ENCODE measurements at regions of chr4 and their contacts with region 1.

Region 1: DNA sequence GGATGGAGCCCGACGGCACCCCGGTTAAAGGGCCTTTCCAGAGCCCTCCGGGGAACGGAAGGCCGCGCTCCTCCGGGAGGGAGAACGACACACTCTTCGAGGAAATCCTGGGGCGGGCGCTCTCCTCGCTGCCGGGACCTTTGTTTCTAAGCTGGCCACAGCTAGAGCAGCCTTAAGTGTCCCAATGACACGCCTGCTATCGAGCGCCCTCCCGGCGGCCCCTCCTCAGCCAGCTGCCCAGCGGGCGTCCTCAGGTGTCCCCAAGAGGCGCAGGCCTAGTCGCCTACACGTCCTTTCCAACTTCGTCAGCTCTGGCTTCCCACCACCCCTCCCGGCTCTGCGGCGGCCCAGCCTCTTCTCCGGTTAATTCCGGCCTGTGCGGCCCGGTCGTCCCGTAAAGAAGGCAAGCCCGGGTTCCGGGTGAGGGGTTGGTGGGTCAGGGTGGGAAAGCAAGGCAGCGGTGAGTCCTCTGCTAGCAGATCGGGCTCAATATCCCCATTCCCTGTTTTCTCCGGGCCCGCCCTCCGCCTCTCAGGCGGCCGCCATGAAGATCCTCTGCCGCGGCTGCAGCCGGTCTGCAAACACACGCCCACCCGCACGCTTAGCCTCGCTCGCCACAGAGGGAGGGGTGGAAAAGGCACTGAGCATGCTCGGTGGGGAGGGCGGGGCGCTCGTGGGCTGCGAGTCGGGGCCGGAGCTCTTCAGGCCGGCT is 449 bp upstream of the RAP1GDS1 start:
- DNase-seq: peak in 6 of 9 donors; percentile 69 to 95 (median 78)
- ATAC-seq: peak; percentile 85
- H3K4me3 ChIP-seq: peak overlapping the region; percentile 90
- H3K4me3 Mint-ChIP-seq: peak overlapping the region; percentile 92 to 98 (median 94)
- H3K27ac ChIP-seq: peak overlapping the region; percentile 86
- H3K27ac Mint-ChIP-seq: peak overlapping the region; percentile 84 to 97 (median 92)
- H3K4me1 ChIP-seq: peaks cover 5 to 12% of the 10 kb centered on the region in 2 donors
- H3K4me1 Mint-ChIP-seq: peaks cover 31 to 60% (median 54%) of the 10 kb centered on the region in 7 donors
- H3K27me3 ChIP-seq: no peaks in the 10 kb centered on the region
- H3K27me3 Mint-ChIP-seq: no peaks in the 10 kb centered on the region

Region 2: GRCh38 chr4:98242538-98242937 is 18.2 kb before region 1 on chr4:
- CTCF ChIA-PET with region 1: no interaction called
- POLR2A ChIA-PET with region 1: no interaction called
- intact Hi-C with region 1: no loop called
- DNase-seq: no peak
- ATAC-seq: no peak
- H3K4me3 ChIP-seq: no peak overlapping the region
- H3K4me3 Mint-ChIP-seq: no peak overlapping the region
- H3K27ac ChIP-seq: no peak overlapping the region
- H3K27ac Mint-ChIP-seq: no peak overlapping the region
- H3K4me1 ChIP-seq: no peaks in the 10 kb centered on the region
- H3K4me1 Mint-ChIP-seq: no peaks in the 10 kb centered on the region
- H3K27me3 ChIP-seq: peaks cover 0 to 3% of the 10 kb centered on the region in 2 donors
- H3K27me3 Mint-ChIP-seq: peaks cover 8 to 33% (median 18%) of the 10 kb centered on the region in 5 donors

Region 3: GRCh38 chr4:98275145-98275544 is 14.4 kb after region 1 on chr4:
- CTCF ChIA-PET with region 1: interaction called, 4 read pairs
- POLR2A ChIA-PET with region 1: interaction called, 3 read pairs
- intact Hi-C with region 1: loop called in 1 of 2 experiments (anchors 1 kb)
- DNase-seq: no peak
- ATAC-seq: no peak
- H3K4me3 ChIP-seq: no peak overlapping the region
- H3K4me3 Mint-ChIP-seq: peak overlapping the region in 1 of 10 donors; percentile 22
- H3K27ac ChIP-seq: no peak overlapping the region
- H3K27ac Mint-ChIP-seq: no peak overlapping the region
- H3K4me1 ChIP-seq: no peaks in the 10 kb centered on the region
- H3K4me1 Mint-ChIP-seq: peaks cover 2 to 37% (median 25%) of the 10 kb centered on the region in 7 donors
- H3K27me3 ChIP-seq: no peaks in the 10 kb centered on the region
- H3K27me3 Mint-ChIP-seq: no peaks in the 10 kb centered on the region

Region 4: DNA sequence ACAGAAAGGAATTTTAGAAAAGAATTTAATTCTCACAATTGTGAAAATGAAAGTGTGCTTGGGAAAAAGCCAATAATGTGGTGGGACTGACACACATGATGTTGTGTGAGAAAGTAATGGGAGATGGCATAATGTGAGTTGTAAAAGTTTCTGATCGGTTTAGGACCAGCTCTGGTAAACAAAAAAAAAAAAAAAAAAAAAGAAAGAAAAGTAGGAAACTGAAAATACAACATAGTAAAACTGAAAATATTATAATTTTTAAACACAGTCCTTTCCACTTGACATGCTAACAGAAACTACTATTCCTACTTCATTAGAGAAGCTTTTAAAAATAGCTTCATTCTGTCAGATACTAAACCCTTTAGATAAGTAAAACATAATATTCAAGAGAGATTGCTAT is 28.6 kb after region 1 on chr4:
- CTCF ChIA-PET with region 1: interaction called, 3 read pairs
- POLR2A ChIA-PET with region 1: interaction called, 4 read pairs
- intact Hi-C with region 1: loop called (anchors 2 kb)
- DNase-seq: no peak
- ATAC-seq: no peak
- H3K4me3 ChIP-seq: no peak overlapping the region
- H3K4me3 Mint-ChIP-seq: peak overlapping the region in 6 of 10 donors; percentile 1 to 64 (median 34)
- H3K27ac ChIP-seq: no peak overlapping the region
- H3K27ac Mint-ChIP-seq: peak overlapping the region in 3 of 9 donors; percentile 26 to 49 (median 36)
- H3K4me1 ChIP-seq: peaks cover 0 to 6% of the 10 kb centered on the region in 2 donors
- H3K4me1 Mint-ChIP-seq: peaks cover 29 to 64% (median 53%) of the 10 kb centered on the region in 7 donors
- H3K27me3 ChIP-seq: no peaks in the 10 kb centered on the region
- H3K27me3 Mint-ChIP-seq: no peaks in the 10 kb centered on the region

Region 5: GRCh38 chr4:98446499-98447375 is 186.0 kb after region 1 on chr4:
- CTCF ChIA-PET with region 1: no interaction called
- POLR2A ChIA-PET with region 1: interaction called, 3 read pairs
- intact Hi-C with region 1: loop called (anchors 1 to 10 kb)
- DNase-seq: peak in 7 of 9 donors; percentile 23 to 53 (median 42)
- ATAC-seq: peak; percentile 89
- H3K4me3 ChIP-seq: peak overlapping the region; percentile 9
- H3K4me3 Mint-ChIP-seq: peak overlapping the region; percentile 49 to 75 (median 71)
- H3K27ac ChIP-seq: no peak overlapping the region
- H3K27ac Mint-ChIP-seq: peak overlapping the region; percentile 52 to 88 (median 76)
- H3K4me1 ChIP-seq: peaks cover 30 to 39% of the 10 kb centered on the region in 2 donors
- H3K4me1 Mint-ChIP-seq: peaks cover 33 to 44% (median 37%) of the 10 kb centered on the region in 7 donors
- H3K27me3 ChIP-seq: no peaks in the 10 kb centered on the region
- H3K27me3 Mint-ChIP-seq: no peaks in the 10 kb centered on the region

Region 6: DNA sequence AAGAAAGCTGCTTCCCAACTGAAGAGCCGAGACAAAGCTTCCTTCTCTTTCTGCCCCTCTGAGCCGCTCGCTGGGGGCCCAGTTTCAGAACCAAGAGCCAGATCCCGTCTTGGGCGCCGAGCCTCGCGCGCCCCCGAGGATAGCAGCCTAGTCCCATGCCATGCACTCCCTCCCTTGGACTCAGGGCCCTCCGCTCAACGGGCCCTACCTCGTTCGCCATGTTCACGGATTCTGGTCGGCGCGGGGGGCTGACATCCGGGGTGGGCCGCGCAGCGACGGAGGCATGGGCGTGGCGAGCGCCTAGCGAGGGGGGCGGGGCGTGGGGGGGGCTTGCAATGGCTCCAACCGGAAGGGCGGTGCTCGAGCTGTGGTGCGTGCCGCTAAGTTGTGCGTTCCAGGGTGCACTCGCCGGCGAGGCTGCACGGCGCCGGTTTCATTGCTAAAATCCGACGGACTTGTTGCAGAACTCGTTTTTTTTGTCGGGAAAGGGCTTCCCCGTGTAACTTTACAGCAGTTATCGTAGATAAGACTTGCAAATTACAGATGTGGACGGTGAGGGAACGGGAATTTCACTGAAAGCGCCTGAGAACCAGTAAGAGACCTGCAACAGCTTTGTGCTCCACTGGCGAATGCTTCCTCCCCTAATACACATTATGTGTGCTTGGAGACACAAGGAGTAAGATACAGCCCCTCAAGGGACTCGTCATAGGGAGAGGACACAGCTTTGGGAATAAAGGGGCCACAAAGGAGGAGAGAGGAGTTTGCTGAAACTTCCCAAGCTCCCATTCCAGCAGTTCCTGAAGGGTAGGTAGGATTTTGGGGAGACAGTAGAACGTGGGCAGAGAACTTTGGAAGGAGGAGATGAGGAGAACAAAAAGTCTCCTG is 828.0 kb after region 1 on chr4 and contains the start of gene ADH5:
- CTCF ChIA-PET with region 1: no interaction called
- POLR2A ChIA-PET with region 1: interaction called, 6 read pairs
- intact Hi-C with region 1: loop called (anchors 1 to 2 kb)
- DNase-seq: peak; percentile 75 to 90 (median 85)
- ATAC-seq: peak; percentile 98
- H3K4me3 ChIP-seq: peak within 1 kb of the TSS; percentile 98
- H3K4me3 Mint-ChIP-seq: peak within 1 kb of the TSS; percentile 93 to 99 (median 98)
- H3K27ac ChIP-seq: peak within 1 kb of the TSS; percentile 85
- H3K27ac Mint-ChIP-seq: peak within 1 kb of the TSS; percentile 94 to 99 (median 98)
- H3K4me1 ChIP-seq: peaks cover 8 to 9% of the 10 kb centered on the region in 2 donors
- H3K4me1 Mint-ChIP-seq: peaks cover 28 to 67% (median 57%) of the 10 kb centered on the region in 7 donors
- H3K27me3 ChIP-seq: no peaks in the 10 kb centered on the region
- H3K27me3 Mint-ChIP-seq: peaks cover 0 to 11% (median 0%) of the 10 kb centered on the region in 5 donors
- total RNA-seq, gene ADH5: 42.7 to 102 (median 74.0) TPM

Region 7: DNA sequence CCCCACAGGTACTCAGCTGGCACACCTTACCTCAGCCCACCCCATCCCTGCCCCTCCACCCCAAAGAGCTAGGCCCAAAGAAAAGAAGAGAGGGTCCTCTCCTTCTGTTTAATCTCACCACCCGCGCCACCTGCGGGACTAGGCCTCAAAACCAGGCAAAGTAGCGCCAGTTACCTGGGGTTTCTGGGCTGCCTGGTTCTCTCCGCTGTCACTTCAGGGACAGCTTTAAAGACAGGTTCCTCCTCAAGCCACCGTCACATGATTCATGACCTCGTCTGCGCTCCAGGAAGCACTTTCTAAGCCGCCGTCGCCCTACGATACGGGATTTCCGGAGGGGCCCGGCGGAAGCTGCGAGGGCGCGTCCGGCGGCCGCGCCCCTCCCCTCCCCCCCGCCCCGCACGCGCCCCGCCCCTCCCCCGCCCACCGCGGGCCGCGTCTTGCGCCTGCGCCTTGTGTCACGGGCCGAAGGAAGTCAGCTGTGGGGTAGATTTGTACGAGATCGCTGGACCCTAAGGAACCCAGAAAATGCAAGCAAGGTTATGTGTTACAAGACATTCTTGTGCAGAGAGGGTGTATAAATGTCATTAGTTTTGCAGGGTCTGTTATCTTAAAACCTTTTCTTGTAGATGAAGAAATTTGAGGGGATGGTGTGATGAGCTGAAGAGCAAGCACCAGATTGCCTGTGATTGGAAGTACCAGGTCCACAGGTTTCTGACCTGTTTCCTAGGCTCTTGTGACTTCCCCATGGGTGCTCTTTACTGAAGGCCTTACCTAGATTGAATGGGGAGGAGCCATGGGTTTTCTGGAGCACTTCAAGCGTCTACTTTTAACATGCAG is 1633.6 kb after region 1 on chr4 and contains the start of gene LAMTOR3:
- CTCF ChIA-PET with region 1: no interaction called
- POLR2A ChIA-PET with region 1: interaction called, 3 read pairs
- intact Hi-C with region 1: loop called in 1 of 2 experiments (anchors 2 kb)
- DNase-seq: peak; percentile 70 to 92 (median 89)
- ATAC-seq: peak; percentile 98
- H3K4me3 ChIP-seq: peak within 1 kb of the TSS; percentile 92
- H3K4me3 Mint-ChIP-seq: peak within 1 kb of the TSS; percentile 96 to 99 (median 98)
- H3K27ac ChIP-seq: peak within 1 kb of the TSS; percentile 96
- H3K27ac Mint-ChIP-seq: peak within 1 kb of the TSS; percentile 96 to 99 (median 98)
- H3K4me1 ChIP-seq: peaks cover 13 to 25% of the 10 kb centered on the region in 2 donors
- H3K4me1 Mint-ChIP-seq: peaks cover 25 to 55% (median 52%) of the 10 kb centered on the region in 7 donors
- H3K27me3 ChIP-seq: no peaks in the 10 kb centered on the region
- H3K27me3 Mint-ChIP-seq: no peaks in the 10 kb centered on the region
- total RNA-seq, gene LAMTOR3: 20.1 to 32.6 (median 27.4) TPM

Measured in naive thymus-derived CD4-positive, alpha-beta T cell (primary cell).